Activated CD8-positive, alpha-beta memory T cell treated with anti-CD3 and anti-CD28 coated beads, Interleukin-2, amount 10 ng/mL, durations not matched to agents 7 days and 5 days (primary cell): ENCODE measurements at regions of chr18 and their contacts with region 1.

Region 1: GRCh38 chr18:12391618-12392165 is 14.7 kb upstream of the AFG3L2 start:
- DNase-seq: peak; percentile 66
- ATAC-seq: peak; percentile 91
- H3K4me3 Mint-ChIP-seq: no peak overlapping the region
- H3K27ac Mint-ChIP-seq: no peak overlapping the region
- H3K4me1 Mint-ChIP-seq: peaks cover 2% of the 10 kb centered on the region
- H3K27me3 Mint-ChIP-seq: peaks cover 10% of the 10 kb centered on the region

Region 2: DNA sequence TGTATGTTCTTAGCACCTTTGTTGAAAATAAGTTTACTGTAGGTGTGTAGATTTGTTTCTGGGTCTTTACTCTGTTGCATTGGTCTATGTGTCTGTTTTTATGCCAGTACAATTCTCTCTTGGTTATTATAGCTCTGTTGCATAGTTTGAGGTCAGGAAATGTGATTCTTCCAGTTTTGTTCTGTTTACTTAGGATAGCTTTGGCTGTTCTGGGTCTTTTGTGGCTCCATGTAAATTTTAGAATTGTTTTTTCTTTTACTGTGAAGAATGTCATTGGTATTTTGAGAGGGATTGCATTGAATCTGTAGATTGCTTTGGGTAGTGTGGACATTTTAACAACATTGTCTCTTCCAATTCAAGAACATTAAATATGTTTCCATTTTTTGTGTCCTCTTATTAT is 228.9 kb before region 1 on chr18:
- CTCF ChIA-PET with region 1: no interaction called
- DNase-seq: no peak
- ATAC-seq: no peak
- H3K4me3 Mint-ChIP-seq: no peak overlapping the region
- H3K27ac Mint-ChIP-seq: no peak overlapping the region
- H3K4me1 Mint-ChIP-seq: no peaks in the 10 kb centered on the region
- H3K27me3 Mint-ChIP-seq: peaks cover 52% of the 10 kb centered on the region

Region 3: GRCh38 chr18:12278741-12279682 is 112.7 kb before region 1 on chr18:
- CTCF ChIA-PET with region 1: no interaction called
- DNase-seq: no peak
- ATAC-seq: no peak
- H3K4me3 Mint-ChIP-seq: no peak overlapping the region
- H3K27ac Mint-ChIP-seq: no peak overlapping the region
- H3K4me1 Mint-ChIP-seq: peaks cover 3% of the 10 kb centered on the region
- H3K27me3 Mint-ChIP-seq: peaks cover 20% of the 10 kb centered on the region

Region 4: GRCh38 chr18:12295901-12296386 is 95.7 kb before region 1 on chr18:
- CTCF ChIA-PET with region 1: no interaction called
- DNase-seq: no peak
- ATAC-seq: no peak
- H3K4me3 Mint-ChIP-seq: no peak overlapping the region
- H3K27ac Mint-ChIP-seq: no peak overlapping the region
- H3K4me1 Mint-ChIP-seq: no peaks in the 10 kb centered on the region
- H3K27me3 Mint-ChIP-seq: peaks cover 39% of the 10 kb centered on the region

Region 5: DNA sequence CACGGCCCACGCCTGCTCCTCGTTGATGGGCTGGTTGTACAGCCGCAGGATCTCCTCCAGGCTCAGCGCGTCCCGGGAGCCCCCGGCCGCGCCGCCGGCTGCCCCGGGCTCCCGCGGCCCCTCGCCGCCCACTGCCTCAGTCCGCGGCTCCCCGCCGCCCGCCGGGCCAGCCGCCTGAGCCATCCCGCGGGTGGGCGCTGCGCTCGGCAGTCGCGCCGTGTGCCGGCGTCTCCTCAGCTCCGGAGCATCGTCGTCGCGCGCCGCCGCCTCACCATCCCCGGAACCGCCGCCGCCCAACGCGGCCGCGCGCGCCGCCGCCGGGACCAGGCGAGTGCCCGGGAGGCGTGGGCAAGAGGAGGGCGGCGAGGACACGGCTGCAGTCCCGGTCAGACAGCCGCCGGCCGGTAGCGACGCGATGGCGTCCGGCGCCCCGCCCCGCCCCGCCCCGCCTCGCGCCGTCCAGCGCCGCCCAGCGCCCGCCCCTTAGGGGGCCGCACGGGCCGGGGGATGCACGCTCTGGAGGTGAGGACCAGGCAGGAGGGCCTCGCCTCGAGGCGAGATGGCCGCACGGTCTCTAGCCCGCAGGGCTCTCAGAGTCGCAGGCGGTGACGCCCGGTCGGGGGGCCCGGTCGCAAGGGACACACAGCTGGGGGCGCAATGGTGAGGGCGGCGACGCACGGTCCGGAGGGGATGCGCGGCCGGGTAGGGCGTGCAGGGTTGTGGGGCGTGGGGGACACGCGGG is 266.2 kb after region 1 on chr18 and contains the start of gene SPIRE1:
- CTCF ChIA-PET with region 1: interaction called, 20 read pairs
- DNase-seq: peak; percentile 50
- ATAC-seq: peak; percentile 83
- H3K4me3 Mint-ChIP-seq: peak within 1 kb of the TSS; percentile 72
- H3K27ac Mint-ChIP-seq: no peak within 1 kb of the TSS
- H3K4me1 Mint-ChIP-seq: peaks cover 30% of the 10 kb centered on the region
- H3K27me3 Mint-ChIP-seq: peaks cover 20% of the 10 kb centered on the region
- total RNA-seq, gene SPIRE1: 3.4 to 9.6 TPM